ENCODE measurements at regions of chr1 and their contacts with region 1.

Region 1: DNA sequence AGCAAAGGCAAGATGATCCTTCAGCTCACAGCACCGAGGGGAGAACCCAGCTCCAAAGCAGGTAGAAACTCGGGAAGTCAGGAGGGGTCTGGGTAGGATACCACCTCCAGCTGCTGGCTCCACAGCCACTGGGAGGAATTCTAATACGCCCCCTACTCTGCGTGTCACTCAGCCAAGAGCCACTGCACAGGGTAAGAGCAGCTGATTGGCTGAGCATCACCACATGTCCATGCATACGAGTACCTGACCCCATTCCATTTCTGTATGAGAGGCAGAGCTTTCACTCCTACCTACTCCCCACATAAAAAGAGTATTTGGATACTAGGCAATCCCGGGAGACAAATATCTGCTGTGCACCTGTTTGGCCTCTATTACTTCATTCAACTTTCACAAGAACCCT is 121.4 kb downstream of the RRAGC start:
- DNase-seq: no peak
- ATAC-seq: no peak
- H3K4me3 ChIP-seq: no peak overlapping the region
- H3K27ac ChIP-seq: no peak overlapping the region
- H3K4me1 ChIP-seq: no peaks in the 10 kb centered on the region
- H3K27me3 ChIP-seq: 0 out of 2 replicates have a peak, but pooled peaks cover 4% of the 10 kb centered on the region
- CTCF ChIP-seq: no peak

Region 2: GRCh38 chr1:36782085-36782484 is 1956.1 kb before region 1 on chr1:
- CTCF ChIA-PET with region 1: no interaction called
- POLR2A ChIA-PET with region 1: interaction called, 11 read pairs
- in situ Hi-C with region 1: no loop called
- intact Hi-C with region 1: no loop called
- DNase-seq: no peak
- ATAC-seq: no peak
- H3K4me3 ChIP-seq: no peak overlapping the region
- H3K27ac ChIP-seq: no peak overlapping the region
- H3K4me1 ChIP-seq: no peaks in the 10 kb centered on the region
- H3K27me3 ChIP-seq: peaks cover 6% of the 10 kb centered on the region; the same call in 1 of the 2 replicates
- CTCF ChIP-seq: no peak

Region 3: DNA sequence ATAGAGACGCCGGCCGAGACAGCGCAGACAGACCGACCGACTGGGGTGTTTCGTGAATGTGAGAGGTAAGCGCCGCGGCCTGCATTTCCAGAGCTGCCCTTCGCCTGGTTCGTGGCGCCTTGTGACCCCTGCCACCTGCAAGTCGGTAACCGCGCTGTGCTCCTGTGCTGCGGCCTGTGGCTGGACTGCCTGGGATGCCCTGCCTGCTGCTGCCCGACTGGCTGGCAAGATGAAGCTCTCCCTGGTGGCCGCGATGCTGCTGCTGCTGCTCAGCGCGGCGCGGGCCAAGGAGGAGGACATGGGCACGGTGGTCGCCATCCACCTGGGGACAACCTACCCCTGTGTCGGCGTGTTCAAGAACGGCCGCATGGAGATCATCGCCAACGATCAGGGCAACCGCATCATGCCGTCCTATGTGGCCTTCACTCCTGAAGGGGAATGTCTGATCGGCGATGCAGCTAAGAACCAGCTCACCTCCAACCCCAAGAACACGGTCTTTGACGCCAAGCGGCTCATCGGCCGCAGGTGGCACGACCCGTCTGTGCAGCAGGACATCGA is 29.4 kb before region 1 on chr1:
- CTCF ChIA-PET with region 1: no interaction called
- POLR2A ChIA-PET with region 1: no interaction called
- in situ Hi-C with region 1: no loop called
- intact Hi-C with region 1: no loop called
- DNase-seq: no peak
- ATAC-seq: no peak
- H3K4me3 ChIP-seq: no peak overlapping the region
- H3K27ac ChIP-seq: no peak overlapping the region
- H3K4me1 ChIP-seq: no peaks in the 10 kb centered on the region
- H3K27me3 ChIP-seq: peaks cover 3% of the 10 kb centered on the region
- CTCF ChIP-seq: no peak

Region 4: DNA sequence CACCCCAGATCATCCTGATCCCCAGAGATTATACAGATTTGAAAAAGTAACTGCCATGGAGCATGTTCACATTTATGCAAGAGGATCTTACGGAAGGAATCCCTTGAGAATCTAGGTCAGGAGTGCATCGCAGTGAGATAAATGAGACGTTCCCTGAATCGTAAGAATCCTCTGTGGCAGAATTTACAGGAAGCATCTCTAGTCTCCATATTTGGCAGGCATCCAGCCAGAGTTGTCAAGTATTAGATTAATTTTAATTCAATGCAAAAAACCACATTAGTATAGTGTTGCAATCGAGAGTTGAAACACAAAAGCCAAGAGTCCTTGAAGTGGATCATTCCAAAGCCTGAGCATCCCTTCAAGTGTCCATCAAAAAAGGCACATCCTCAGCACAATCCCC is 20.6 kb after region 1 on chr1:
- CTCF ChIA-PET with region 1: interaction called, 11 read pairs
- POLR2A ChIA-PET with region 1: interaction called, 4 read pairs
- in situ Hi-C with region 1: no loop called
- intact Hi-C with region 1: no loop called
- DNase-seq: no peak
- ATAC-seq: no peak
- H3K4me3 ChIP-seq: no peak overlapping the region
- H3K27ac ChIP-seq: no peak overlapping the region
- H3K4me1 ChIP-seq: no peaks in the 10 kb centered on the region
- H3K27me3 ChIP-seq: peaks cover 7% of the 10 kb centered on the region
- CTCF ChIP-seq: no peak

Region 5: DNA sequence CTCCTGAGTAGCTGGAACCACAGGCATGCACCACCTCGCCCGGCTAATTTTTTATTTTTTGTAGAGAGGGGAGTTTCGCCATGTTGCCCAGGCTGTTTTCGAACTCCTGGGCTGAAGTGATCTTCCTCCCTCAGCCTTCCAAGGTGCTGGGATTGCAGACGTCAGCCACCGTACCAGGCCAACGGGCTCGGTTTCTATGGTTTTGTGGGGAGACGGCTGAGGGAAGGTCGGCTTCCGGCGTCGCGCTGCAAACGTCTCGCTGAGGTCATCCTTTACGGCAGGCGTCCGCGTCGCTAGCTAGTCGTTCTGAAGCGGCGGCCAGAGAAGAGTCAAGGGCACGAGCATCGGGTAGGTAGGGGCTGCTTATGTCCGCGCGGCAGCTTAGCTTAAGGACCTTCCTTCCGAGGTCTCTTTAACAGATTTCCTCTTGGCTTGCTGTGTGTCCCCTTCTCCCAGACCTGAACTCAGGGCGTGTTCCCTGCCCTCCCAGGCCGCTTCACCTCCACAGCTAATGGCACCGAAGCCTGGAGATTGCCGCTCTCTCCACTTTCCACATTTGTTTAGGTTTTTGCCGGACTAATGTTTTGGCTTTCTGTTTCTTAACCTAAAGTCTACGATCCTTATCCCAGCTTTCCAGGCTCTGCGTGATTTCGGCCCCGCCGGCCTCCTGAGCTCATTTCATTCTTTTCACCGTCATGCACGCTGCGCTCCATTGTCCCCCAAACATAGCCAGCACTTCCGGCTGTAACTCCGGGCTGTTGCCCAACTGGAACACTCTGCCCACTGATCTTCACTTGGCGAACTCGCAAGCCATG is 288.1 kb after region 1 on chr1 and contains the start of gene NDUFS5:
- CTCF ChIA-PET with region 1: no interaction called
- POLR2A ChIA-PET with region 1: no interaction called
- in situ Hi-C with region 1: no loop called
- intact Hi-C with region 1: no loop called
- DNase-seq: peak; percentile 79
- ATAC-seq: peak; percentile 97
- H3K4me3 ChIP-seq: peak within 1 kb of the TSS; percentile 96 to 100
- H3K27ac ChIP-seq: peak within 1 kb of the TSS; percentile 98
- H3K4me1 ChIP-seq: peaks cover 8% of the 10 kb centered on the region; the same call in 1 of the 2 replicates
- H3K27me3 ChIP-seq: no peaks in the 10 kb centered on the region
- CTCF ChIP-seq: no peak
- total RNA-seq, gene NDUFS5: 316 TPM